ENCODE measurements at regions of chr18 and their contacts with region 1.

Region 1: DNA sequence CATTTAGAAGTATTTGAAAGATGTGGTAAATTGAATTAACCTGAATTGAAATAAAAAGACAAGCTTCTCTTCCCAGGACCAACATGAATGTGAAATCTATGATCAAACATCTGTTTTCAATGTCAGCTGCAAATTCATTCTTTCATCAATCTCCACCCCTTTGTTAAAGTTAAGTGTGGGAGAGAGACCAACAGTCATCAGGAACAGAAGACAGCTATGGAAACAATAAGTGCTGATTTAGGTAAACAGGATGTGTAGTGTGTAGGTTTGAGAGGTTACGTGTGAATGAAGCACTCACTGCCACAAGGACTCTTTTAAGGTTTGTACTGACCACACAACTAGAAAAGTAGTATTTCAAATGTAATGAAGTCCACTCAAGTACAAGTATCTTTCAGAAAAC is 1659.8 kb upstream of the CELF4 start:
- DNase-seq: no peak
- ATAC-seq: no peak
- H3K4me3 ChIP-seq: no peak overlapping the region
- H3K4me3 Mint-ChIP-seq: no peak overlapping the region
- H3K27ac ChIP-seq: no peak overlapping the region
- H3K27ac Mint-ChIP-seq: no peak overlapping the region
- H3K4me1 ChIP-seq: no peaks in the 10 kb centered on the region
- H3K4me1 Mint-ChIP-seq: no peaks in the 10 kb centered on the region
- H3K27me3 ChIP-seq: no peaks in the 10 kb centered on the region
- H3K27me3 Mint-ChIP-seq: no peaks in the 10 kb centered on the region
- CTCF ChIP-seq: no peak

Region 2: GRCh38 chr18:39244241-39244640 is 18.9 kb after region 1 on chr18:
- intact Hi-C with region 1: loop called (anchors 2 kb)
- DNase-seq: no peak
- ATAC-seq: no peak
- H3K4me3 ChIP-seq: no peak overlapping the region
- H3K4me3 Mint-ChIP-seq: no peak overlapping the region
- H3K27ac ChIP-seq: no peak overlapping the region
- H3K27ac Mint-ChIP-seq: no peak overlapping the region
- H3K4me1 ChIP-seq: no peaks in the 10 kb centered on the region
- H3K4me1 Mint-ChIP-seq: no peaks in the 10 kb centered on the region
- H3K27me3 ChIP-seq: no peaks in the 10 kb centered on the region
- H3K27me3 Mint-ChIP-seq: no peaks in the 10 kb centered on the region
- CTCF ChIP-seq: no peak